Vagina (tissue), 2 donors: ENCODE measurements at regions of chr12 and their contacts with region 1.

Region 1: DNA sequence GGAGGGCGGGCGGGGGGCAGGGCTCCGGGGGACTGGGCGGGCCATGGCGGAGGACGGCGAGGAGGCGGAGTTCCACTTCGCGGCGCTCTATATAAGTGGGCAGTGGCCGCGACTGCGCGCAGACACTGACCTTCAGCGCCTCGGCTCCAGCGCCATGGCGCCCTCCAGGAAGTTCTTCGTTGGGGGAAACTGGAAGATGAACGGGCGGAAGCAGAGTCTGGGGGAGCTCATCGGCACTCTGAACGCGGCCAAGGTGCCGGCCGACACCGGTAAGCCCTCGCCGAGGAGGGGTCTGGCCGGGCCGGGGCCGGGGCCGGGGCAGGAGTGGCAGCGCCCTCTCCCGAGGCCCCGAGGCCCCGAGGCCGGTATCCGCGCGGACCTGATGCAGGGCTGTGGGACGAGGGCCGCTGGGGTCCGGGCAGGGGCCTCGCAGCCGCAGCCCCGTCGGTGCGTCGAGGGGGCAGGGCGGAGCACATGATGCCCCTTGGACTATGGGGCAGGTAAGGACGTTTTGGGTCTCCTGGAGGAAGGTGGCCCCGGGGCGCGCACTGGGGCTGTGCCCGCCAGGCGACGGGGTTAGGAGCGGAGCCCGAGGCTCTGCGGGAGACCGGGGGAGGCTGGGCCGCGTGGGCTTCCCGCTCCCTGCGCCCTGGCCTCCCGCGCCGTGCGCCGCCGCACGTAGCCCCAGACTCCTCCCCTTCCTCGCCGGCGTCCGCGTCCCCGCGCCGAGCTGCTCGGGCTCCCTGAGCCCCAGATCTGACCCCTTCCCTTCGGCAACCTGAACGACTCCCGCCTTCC is at the start of gene TPI1:
- DNase-seq: no peak
- H3K4me3 ChIP-seq: peak within 1 kb of the TSS; percentile 92 to 99
- H3K27ac ChIP-seq: peak within 1 kb of the TSS; percentile 93
- H3K4me1 ChIP-seq: peaks cover 49% of the 10 kb centered on the region
- H3K27me3 ChIP-seq: no peaks in the 10 kb centered on the region
- CTCF ChIP-seq: peak; percentile 8 to 22 (median 17)
- POLR2A ChIP-seq: peak in 1 of 2 donors; percentile 97
- total RNA-seq, gene TPI1: 274 TPM

Region 2: DNA sequence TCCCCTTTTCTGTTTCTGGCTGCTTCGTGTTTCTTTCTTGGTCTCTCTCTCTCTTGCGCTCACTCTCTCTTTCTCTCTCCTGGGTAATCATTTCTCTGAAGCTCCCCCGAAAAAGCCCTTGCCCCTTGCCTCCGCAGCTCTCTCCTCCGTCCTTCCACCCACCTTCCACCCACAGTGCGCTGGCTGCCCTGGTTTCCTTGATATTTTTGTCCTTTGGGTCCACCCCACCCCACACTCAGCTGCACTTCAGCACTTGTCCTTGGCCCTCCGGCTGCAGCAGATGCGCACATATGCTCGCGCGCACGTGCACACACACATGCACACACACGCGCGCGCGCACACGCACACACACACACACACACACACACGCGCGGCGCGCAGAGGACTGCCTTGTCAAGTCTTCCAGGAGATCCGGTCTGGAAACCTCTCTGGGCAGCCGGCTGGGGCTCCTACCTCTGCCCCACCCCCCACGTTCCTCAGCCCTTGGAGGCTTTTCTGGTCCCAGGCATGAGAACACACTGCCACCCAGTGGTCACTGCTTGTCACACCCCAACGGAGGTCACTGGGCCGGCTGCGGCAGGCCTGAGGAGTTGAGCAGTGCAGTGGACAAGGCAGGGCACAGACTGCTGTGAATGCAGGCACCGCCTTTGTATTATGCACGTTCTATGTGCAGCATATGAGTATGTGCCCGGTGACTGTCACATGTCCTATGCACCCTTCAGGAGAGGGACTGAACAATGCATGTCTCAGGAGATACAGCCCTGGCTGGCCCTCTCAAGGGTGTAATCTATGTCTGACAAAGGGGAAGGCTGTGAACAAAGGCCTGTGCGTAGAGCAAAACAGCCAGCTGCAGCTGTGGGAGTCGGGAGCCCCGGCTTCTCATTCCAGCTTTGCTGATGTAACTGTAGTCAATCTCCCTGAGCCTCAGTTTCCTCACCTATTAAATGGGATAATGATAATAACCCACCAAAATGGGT is 88.8 kb before region 1 on chr12:
- intact Hi-C with region 1: no loop called
- DNase-seq: no peak
- H3K4me3 ChIP-seq: peak overlapping the region; percentile 40 to 51
- H3K27ac ChIP-seq: peak overlapping the region; percentile 82
- H3K4me1 ChIP-seq: peaks cover 14% of the 10 kb centered on the region
- H3K27me3 ChIP-seq: no peaks in the 10 kb centered on the region
- CTCF ChIP-seq: peak; percentile 86 to 100 (median 98)
- POLR2A ChIP-seq: no peak

Region 3: GRCh38 chr12:6927379-6928024 is 59.9 kb after region 1 on chr12 and contains the start of gene ATN1:
- intact Hi-C with region 1: loop called (anchors 5 kb)
- DNase-seq: no peak
- H3K4me3 ChIP-seq: peak within 1 kb of the TSS; percentile 73 to 95
- H3K27ac ChIP-seq: peak within 1 kb of the TSS; percentile 99
- H3K4me1 ChIP-seq: peaks cover 71% of the 10 kb centered on the region
- H3K27me3 ChIP-seq: no peaks in the 10 kb centered on the region
- CTCF ChIP-seq: no peak
- POLR2A ChIP-seq: peak in 1 of 2 donors; percentile 42
- total RNA-seq, gene ATN1: 92.1 TPM

Region 4: GRCh38 chr12:6961711-6962284 is 94.2 kb after region 1 on chr12:
- intact Hi-C with region 1: no loop called
- DNase-seq: no peak
- H3K4me3 ChIP-seq: peak overlapping the region; percentile 35 to 52
- H3K27ac ChIP-seq: peak overlapping the region; percentile 87
- H3K4me1 ChIP-seq: peaks cover 29% of the 10 kb centered on the region
- H3K27me3 ChIP-seq: no peaks in the 10 kb centered on the region
- CTCF ChIP-seq: no peak
- POLR2A ChIP-seq: no peak